Posterior vena cava (tissue), 2 donors: ENCODE measurements at regions of chr6 and their contacts with region 1.

Region 1: DNA sequence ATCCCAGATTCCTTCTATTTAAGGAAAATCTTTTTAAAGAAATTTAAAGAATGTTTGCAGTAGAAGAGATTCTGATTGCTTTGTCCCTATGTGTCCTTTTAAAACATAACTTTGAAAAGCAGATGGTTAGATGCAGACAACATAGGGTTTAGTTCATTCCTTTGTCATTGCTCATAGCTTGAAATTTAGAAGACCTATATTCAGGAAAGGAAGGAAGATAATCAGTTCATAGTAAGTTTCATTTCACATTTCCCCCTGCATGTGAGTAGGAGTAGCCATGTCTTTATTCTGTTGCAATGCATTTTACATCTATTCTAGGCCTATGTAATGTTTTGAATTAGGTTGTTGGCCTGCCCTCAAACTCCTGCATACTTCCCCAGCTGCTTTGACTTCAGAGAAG is 197.9 kb upstream of the GRIK2 start:
- DNase-seq: no peak

Region 2: GRCh38 chr6:100944644-100945043 is 250.9 kb before region 1 on chr6:
- intact Hi-C with region 1: no loop called
- DNase-seq: no peak

Region 3: GRCh38 chr6:101231606-101232235 is 36.1 kb after region 1 on chr6:
- intact Hi-C with region 1: loop called in 1 of 2 experiments (anchors 2 kb)
- DNase-seq: no peak